ENCODE measurements at regions of chr12 and their contacts with region 1.

Region 1: DNA sequence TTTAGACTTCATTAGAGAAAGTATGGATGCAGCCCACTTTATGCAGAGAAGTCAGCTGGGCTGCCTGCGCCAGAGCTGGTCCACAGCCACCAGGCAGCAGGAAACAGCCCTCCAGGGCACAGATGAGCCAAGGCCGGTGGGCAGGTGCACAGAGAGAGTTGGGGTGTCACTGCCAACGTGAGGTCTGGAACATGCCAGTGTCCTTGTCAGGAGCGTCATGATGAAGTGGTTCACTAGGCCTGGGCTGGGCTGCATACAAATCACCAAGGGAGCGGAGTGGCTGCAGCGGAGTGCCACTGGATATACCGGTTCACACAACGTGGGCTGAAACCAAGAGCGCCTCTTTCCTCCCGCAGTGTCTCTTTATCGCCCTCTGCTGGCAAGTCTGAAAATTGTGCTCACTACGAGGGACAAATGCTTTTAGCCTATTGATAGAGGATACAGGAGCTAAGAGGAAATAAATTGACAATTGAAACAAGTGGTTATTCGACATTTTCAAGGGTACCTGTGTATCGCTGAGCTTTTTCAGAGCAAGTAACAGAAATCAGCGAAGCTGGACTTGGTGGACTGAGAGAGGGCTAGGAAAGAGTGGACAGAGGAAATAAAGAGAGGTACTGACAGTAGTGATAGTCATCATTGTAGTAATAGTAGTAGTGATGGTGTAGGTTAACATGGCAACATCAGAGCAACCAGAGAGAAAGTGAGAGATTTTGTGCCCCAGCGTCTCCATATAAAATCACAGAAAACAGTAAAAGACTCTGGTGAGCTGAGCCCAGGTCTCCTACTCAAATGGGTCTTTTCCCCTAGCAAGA is 52.0 kb upstream of the ITPR2 start:
- DNase-seq: peak; percentile 78
- ATAC-seq: peak; percentile 95
- H3K4me3 ChIP-seq: peak overlapping the region; percentile 32 to 65 (median 35); a peak in 4 of 6 replicates
- H3K27ac ChIP-seq: no peak overlapping the region
- H3K4me1 ChIP-seq: 0 out of 2 replicates have a peak, but pooled peaks cover 5% of the 10 kb centered on the region
- H3K27me3 ChIP-seq: no peaks in the 10 kb centered on the region
- CTCF ChIP-seq: peak; percentile 95
- EP300 ChIP-seq: no peak
- POLR2A ChIP-seq: no peak
- RAD21 ChIP-seq: peak; percentile 79

Region 2: DNA sequence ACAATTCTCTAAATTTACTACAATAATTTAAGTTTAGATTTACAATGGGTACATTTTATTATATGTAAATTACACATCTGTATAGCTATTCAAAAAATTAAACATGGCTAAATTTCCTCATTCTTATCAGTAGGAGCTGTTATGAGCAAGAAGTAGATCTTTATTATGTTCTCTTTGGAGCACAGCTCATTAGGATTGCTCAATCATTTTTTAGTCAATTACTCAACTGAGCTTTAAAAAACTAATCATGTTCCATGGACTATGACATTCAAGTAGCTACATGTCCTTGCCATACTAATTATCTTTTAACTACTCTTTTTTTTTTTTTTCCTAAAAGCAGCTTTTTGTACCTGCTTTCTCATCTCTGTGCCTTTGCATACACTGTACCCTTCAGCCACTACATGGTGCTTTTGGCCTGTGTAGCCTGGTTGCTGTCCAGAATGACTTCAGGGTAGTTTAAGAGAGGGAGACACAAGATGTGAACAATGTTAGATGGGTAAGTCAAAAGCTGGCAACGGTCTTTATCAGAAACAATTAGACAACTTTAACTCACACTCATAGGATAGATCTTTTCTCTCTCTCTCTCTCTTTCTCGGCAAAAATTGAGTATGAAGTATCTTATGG is 620.6 kb before region 1 on chr12:
- CTCF ChIA-PET with region 1: no interaction called
- POLR2A ChIA-PET with region 1: no interaction called
- in situ Hi-C with region 1: no loop called
- intact Hi-C with region 1: no loop called
- DNase-seq: no peak
- ATAC-seq: no peak
- H3K4me3 ChIP-seq: no peak overlapping the region
- H3K27ac ChIP-seq: no peak overlapping the region
- H3K4me1 ChIP-seq: peaks cover 6% of the 10 kb centered on the region
- H3K27me3 ChIP-seq: no peaks in the 10 kb centered on the region
- CTCF ChIP-seq: no peak
- EP300 ChIP-seq: no peak
- POLR2A ChIP-seq: no peak
- RAD21 ChIP-seq: no peak

Region 3: GRCh38 chr12:26701604-26702215 is 183.3 kb before region 1 on chr12:
- CTCF ChIA-PET with region 1: no interaction called
- POLR2A ChIA-PET with region 1: no interaction called
- in situ Hi-C with region 1: no loop called
- intact Hi-C with region 1: no loop called
- DNase-seq: peak; percentile 23
- ATAC-seq: no peak
- H3K4me3 ChIP-seq: no peak overlapping the region
- H3K27ac ChIP-seq: no peak overlapping the region
- H3K4me1 ChIP-seq: peaks cover 19% of the 10 kb centered on the region
- H3K27me3 ChIP-seq: no peaks in the 10 kb centered on the region
- CTCF ChIP-seq: peak; percentile 39
- EP300 ChIP-seq: no peak
- POLR2A ChIP-seq: no peak
- RAD21 ChIP-seq: no peak

Region 4: GRCh38 chr12:26748741-26749431 is 136.1 kb before region 1 on chr12:
- CTCF ChIA-PET with region 1: no interaction called
- POLR2A ChIA-PET with region 1: no interaction called
- in situ Hi-C with region 1: no loop called
- intact Hi-C with region 1: no loop called
- DNase-seq: no peak
- ATAC-seq: no peak
- H3K4me3 ChIP-seq: no peak overlapping the region
- H3K27ac ChIP-seq: peak overlapping the region; percentile 33
- H3K4me1 ChIP-seq: peaks cover 100% of the 10 kb centered on the region
- H3K27me3 ChIP-seq: no peaks in the 10 kb centered on the region; a peak in 1 of 5 replicates
- CTCF ChIP-seq: no peak
- EP300 ChIP-seq: peak in 1 of 2 experiments; percentile 31; a peak in 1 of 4 replicates
- POLR2A ChIP-seq: no peak
- RAD21 ChIP-seq: no peak

Region 5: GRCh38 chr12:26853303-26854030 is 31.5 kb before region 1 on chr12:
- CTCF ChIA-PET with region 1: interaction called, 33 read pairs
- POLR2A ChIA-PET with region 1: no interaction called
- in situ Hi-C with region 1: loop called (anchors 5 kb)
- intact Hi-C with region 1: loop called (anchors 1 kb)
- DNase-seq: peak; percentile 58
- ATAC-seq: peak; percentile 94
- H3K4me3 ChIP-seq: peak overlapping the region; percentile 27 to 51 (median 49); a peak in 5 of 6 replicates
- H3K27ac ChIP-seq: no peak overlapping the region
- H3K4me1 ChIP-seq: peaks cover 35% of the 10 kb centered on the region
- H3K27me3 ChIP-seq: no peaks in the 10 kb centered on the region
- CTCF ChIP-seq: peak; percentile 85
- EP300 ChIP-seq: peak in 1 of 2 experiments; percentile 69; a peak in 2 of 4 replicates
- POLR2A ChIP-seq: no peak
- RAD21 ChIP-seq: peak; percentile 70

Region 6: DNA sequence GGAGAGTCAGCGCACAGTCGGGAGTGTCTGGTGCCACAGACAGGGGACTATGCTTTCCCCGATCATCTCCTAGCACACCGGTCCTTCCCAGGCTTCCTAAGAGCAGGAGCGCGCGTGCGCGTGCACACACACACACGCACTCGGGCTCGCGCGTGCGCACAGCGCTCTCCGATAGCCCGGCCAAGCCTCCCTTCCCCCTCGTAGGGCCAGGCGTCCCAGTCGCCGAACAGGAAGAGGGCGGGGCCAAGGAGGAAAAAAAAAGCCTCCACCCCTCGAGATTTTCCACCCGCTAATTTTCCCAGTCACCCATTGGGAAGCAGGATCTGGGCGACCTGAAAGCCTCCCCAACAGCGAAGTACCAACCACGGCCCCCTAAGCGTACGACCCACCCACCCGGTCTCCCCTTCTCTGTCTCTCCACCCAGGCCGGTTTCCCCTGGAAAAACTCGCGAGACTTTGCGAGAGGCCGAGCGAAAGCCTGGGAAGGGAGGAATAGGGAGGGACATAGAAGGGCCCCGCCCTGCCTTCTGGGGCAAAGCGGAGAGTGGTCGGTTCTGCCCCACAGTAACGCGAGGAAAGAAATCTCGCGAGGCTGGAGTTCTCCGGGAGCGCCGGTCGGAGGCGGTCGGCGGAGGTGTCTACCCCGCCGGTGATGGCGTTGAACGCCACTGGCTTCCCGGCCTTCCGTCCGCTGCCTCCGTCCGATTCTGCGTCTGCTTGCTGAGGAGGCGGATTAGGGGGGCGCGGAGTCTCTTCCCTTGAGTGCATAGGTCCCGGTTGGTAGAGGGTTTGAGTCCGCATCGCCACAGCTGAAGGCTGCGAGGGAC is 53.1 kb after region 1 on chr12 and contains the starts of genes FGFR1OP2 and INTS13:
- CTCF ChIA-PET with region 1: no interaction called
- POLR2A ChIA-PET with region 1: no interaction called
- in situ Hi-C with region 1: no loop called
- intact Hi-C with region 1: loop called (anchors 5 kb)
- DNase-seq: peak; percentile 98
- ATAC-seq: peak; percentile 97
- H3K4me3 ChIP-seq: peak within 1 kb of the TSS; percentile 88 to 99 (median 91)
- H3K27ac ChIP-seq: peak within 1 kb of the TSS; percentile 92
- H3K4me1 ChIP-seq: peaks cover 43% of the 10 kb centered on the region
- H3K27me3 ChIP-seq: no peaks in the 10 kb centered on the region; a peak in 1 of 5 replicates
- CTCF ChIP-seq: peak; percentile 17
- EP300 ChIP-seq: no peak
- POLR2A ChIP-seq: peak; percentile 96 to 97
- RAD21 ChIP-seq: 0 out of 2 replicates have a peak, but pooled peaks have one; percentile 19
- total RNA-seq, gene FGFR1OP2: 38.1 and 47.3 TPM in 2 replicates
- total RNA-seq, gene INTS13: 43.7 and 62.3 TPM in 2 replicates

Region 7: DNA sequence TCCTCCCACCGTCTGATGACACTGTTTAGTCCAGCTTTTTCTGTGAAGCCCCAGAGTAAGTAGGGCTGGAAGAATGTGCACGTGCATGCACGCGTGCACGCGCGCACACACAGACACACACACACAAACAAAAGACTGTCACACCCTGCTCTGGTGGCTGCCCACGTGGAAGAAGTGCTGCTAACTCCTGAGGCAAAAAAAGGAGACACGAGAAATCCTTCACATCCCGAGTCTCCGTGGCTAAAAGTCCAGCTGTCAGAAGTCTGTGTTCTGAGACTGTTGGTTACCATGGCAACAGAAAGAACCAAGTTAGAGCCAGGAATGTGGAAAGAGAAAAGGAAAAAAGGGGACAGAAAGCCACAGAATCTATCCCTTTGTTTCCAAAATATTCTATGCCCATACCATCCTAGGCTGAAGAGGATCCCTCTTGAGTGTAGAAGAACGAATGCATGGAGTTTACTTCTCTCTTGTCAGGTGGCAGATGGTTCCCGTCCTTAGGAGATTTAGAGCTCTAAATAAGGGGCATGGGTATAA is 199.0 kb after region 1 on chr12:
- CTCF ChIA-PET with region 1: no interaction called
- POLR2A ChIA-PET with region 1: no interaction called
- in situ Hi-C with region 1: no loop called
- intact Hi-C with region 1: no loop called
- DNase-seq: no peak
- ATAC-seq: no peak
- H3K4me3 ChIP-seq: no peak overlapping the region
- H3K27ac ChIP-seq: no peak overlapping the region
- H3K4me1 ChIP-seq: no peaks in the 10 kb centered on the region
- H3K27me3 ChIP-seq: no peaks in the 10 kb centered on the region
- CTCF ChIP-seq: no peak
- EP300 ChIP-seq: no peak
- POLR2A ChIP-seq: no peak
- RAD21 ChIP-seq: no peak